ENCODE measurements at regions of chr18 and their contacts with region 1.

Region 1: GRCh38 chr18:8036551-8036950 is 469.4 kb downstream of the PTPRM start:
- DNase-seq: no peak
- H3K4me3 Mint-ChIP-seq: no peak overlapping the region
- H3K27ac Mint-ChIP-seq: no peak overlapping the region
- H3K4me1 Mint-ChIP-seq: peaks cover 2% of the 10 kb centered on the region
- H3K27me3 Mint-ChIP-seq: no peaks in the 10 kb centered on the region

Region 2: DNA sequence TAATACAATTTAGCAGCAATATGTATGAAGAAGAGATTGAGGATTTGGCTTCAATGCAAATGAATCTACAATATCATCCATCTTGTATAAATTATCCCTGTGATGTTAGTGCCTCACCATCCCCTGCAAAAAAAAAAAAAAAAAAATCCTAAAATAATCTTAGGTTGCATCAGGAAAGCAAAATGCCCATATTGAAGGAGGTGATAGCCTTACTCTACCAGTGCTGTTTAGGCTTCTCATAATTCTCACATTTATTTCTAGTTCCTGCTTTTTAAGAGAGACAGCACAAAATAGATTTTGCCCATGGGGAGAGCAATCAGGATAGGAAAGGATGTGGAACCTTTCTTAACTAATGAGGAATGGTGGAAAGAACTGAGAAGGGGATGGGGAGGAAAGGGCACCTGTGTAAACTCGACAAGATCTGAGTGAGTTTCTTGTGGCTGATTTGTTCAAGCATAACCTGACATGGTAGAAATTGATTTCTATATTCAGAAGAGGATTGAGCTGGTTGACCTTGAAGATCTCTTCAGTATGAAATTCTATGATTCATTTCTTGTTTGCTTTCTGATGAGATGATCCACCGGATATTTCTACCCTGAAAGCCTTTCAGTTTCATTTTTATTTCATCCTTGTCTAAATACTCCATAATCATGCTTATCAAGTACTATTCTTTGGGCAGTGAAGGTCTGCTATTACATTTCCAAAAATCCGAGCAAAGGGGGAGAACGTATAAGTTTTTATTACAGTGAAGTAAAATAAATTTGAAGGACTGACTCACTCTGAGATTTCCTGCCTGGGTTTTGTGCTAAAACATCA is 78.3 kb before region 1 on chr18:
- CTCF ChIA-PET with region 1: no interaction called
- intact Hi-C with region 1: loop called (anchors 2 kb)
- DNase-seq: no peak
- H3K4me3 Mint-ChIP-seq: no peak overlapping the region
- H3K27ac Mint-ChIP-seq: peak overlapping the region; percentile 44
- H3K4me1 Mint-ChIP-seq: peaks cover 19% of the 10 kb centered on the region
- H3K27me3 Mint-ChIP-seq: no peaks in the 10 kb centered on the region

Region 3: GRCh38 chr18:8081267-8081666 is 44.7 kb after region 1 on chr18:
- CTCF ChIA-PET with region 1: no interaction called
- intact Hi-C with region 1: no loop called
- DNase-seq: no peak
- H3K4me3 Mint-ChIP-seq: no peak overlapping the region
- H3K27ac Mint-ChIP-seq: no peak overlapping the region
- H3K4me1 Mint-ChIP-seq: no peaks in the 10 kb centered on the region
- H3K27me3 Mint-ChIP-seq: no peaks in the 10 kb centered on the region